ENCODE measurements at regions of chr19 and their contacts with region 1.

Region 1: GRCh38 chr19:35995048-35995993 is at the start of gene SDHAF1:
- DNase-seq: peak; percentile 95 to 99 (median 98)

Region 2: DNA sequence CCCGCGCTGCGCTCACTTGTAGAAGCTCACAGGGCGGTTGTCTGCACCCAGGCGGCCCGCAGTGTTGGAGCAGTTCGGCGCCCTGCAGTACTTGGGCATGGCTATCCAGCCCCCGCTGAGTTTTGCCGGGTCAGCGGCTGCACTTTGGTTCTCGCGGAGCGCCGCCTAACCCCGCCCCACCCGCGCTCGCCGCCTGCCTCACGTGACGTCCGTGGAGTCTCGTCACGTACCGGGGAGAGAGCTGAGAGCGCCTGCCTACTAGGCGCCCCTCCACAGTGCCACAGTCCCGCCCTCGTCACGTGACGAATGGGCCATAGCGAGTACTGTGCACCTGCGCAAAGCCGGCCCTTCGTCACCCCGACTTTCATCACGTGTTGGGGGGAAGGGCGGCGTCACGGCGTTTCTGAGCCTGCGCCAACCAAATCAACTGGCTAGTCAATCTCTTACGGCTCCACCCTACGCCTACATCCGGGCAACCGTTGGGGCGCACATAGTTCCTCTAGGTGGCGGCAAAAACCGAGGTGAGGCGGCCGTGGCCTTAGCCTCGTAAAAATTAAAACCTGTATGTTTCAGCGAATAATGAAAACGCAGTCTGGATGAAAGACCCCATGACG is 58.9 kb after region 1 on chr19 and contains the start of gene THAP8:
- intact Hi-C with region 1: loop called (anchors 10 kb)
- DNase-seq: peak; percentile 97 to 100 (median 99)